ENCODE measurements at regions of chr1 and their contacts with region 1.

Region 1: GRCh38 chr1:1157426-1157913 is 16.2 kb upstream of the TTLL10 start:
- DNase-seq: peak; percentile 86 to 91
- H3K4me3 ChIP-seq: peak overlapping the region; percentile 83
- H3K27ac ChIP-seq: peak overlapping the region; percentile 97
- H3K4me1 ChIP-seq: peaks cover 14% of the 10 kb centered on the region
- H3K27me3 ChIP-seq: no peaks in the 10 kb centered on the region
- CTCF ChIP-seq: no peak

Region 2: DNA sequence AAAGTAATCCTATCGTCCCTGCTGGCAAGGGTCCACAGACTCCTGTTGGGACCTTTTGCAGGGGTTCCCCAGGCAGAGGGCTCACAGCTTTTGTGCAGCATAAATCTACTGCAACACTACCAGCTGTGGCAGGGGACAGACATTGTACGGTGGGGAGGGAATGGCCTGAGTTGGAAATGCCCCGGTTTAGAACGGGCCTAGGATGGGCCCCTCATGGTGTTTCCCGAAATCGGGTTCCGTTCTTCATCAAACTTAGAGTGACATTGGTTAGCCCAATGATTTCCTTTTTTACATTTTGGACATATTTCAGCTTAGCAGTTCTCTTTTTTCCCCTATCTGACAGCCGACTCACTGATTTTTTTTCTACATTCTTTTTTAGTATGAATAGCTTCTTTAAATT is 260.2 kb before region 1 on chr1:
- CTCF ChIA-PET with region 1: no interaction called
- POLR2A ChIA-PET with region 1: no interaction called
- intact Hi-C with region 1: no loop called
- DNase-seq: no peak
- H3K4me3 ChIP-seq: no peak overlapping the region
- H3K27ac ChIP-seq: no peak overlapping the region
- H3K4me1 ChIP-seq: no peaks in the 10 kb centered on the region
- H3K27me3 ChIP-seq: peaks cover 17% of the 10 kb centered on the region
- CTCF ChIP-seq: no peak

Region 3: DNA sequence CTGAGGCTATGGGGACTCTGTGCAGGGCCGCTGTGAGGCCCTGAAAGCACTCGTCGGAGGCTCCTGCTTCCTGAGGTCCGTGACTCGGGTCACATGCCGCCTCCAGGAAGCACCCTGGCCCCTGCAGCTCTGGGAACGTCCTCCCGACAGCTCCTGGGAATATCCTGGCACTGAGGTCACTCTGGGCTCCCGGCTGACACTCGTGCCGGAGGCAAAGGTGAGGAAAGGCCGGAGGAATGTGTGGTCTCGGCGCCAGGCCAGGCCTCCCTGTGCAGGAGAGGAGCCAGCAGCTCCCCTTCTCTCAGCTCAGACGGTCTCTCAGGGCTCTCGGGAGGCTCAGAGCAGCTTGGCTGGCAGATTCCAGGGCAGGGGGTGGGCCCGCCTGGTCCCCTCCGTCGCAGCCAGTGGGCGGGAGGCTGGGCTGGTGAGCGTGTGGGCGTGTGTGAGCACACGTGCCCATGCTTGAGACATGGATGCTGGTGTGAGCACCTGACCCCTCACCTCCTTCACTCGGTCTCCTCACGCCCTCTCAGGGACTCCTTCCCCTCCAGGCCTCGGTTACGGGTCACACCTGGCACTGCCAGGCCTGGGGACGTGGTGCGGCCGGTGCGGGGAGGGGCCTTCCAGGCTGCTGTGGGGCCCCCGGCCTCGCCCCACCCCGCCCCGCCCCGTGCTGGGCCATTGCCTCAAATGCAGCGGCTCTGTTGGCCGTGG is 77.9 kb before region 1 on chr1:
- CTCF ChIA-PET with region 1: no interaction called
- POLR2A ChIA-PET with region 1: no interaction called
- intact Hi-C with region 1: loop called (anchors 2 kb)
- DNase-seq: peak; percentile 96
- H3K4me3 ChIP-seq: peak overlapping the region; percentile 55
- H3K27ac ChIP-seq: peak overlapping the region; percentile 93
- H3K4me1 ChIP-seq: peaks cover 20% of the 10 kb centered on the region
- H3K27me3 ChIP-seq: no peaks in the 10 kb centered on the region
- CTCF ChIP-seq: no peak

Region 4: GRCh38 chr1:1115786-1116700 is 41.4 kb before region 1 on chr1 and contains the start of gene C1orf159:
- CTCF ChIA-PET with region 1: no interaction called
- POLR2A ChIA-PET with region 1: interaction called, 15 read pairs
- intact Hi-C with region 1: no loop called
- DNase-seq: peak; percentile 90 to 99
- H3K4me3 ChIP-seq: peak within 1 kb of the TSS; percentile 75
- H3K27ac ChIP-seq: no peak within 1 kb of the TSS
- H3K4me1 ChIP-seq: peaks cover 7% of the 10 kb centered on the region
- H3K27me3 ChIP-seq: no peaks in the 10 kb centered on the region
- CTCF ChIP-seq: no peak
- total RNA-seq, gene C1orf159: 26.6 and 31.1 TPM in 2 replicates

Region 5: GRCh38 chr1:1137256-1138045 is 20.0 kb before region 1 on chr1:
- CTCF ChIA-PET with region 1: no interaction called
- POLR2A ChIA-PET with region 1: interaction called, 19 read pairs
- intact Hi-C with region 1: no loop called
- DNase-seq: no peak
- H3K4me3 ChIP-seq: peak overlapping the region; percentile 55; the same call in 1 of the 2 replicates
- H3K27ac ChIP-seq: no peak overlapping the region
- H3K4me1 ChIP-seq: peaks cover 31% of the 10 kb centered on the region
- H3K27me3 ChIP-seq: no peaks in the 10 kb centered on the region
- CTCF ChIP-seq: no peak

Region 6: DNA sequence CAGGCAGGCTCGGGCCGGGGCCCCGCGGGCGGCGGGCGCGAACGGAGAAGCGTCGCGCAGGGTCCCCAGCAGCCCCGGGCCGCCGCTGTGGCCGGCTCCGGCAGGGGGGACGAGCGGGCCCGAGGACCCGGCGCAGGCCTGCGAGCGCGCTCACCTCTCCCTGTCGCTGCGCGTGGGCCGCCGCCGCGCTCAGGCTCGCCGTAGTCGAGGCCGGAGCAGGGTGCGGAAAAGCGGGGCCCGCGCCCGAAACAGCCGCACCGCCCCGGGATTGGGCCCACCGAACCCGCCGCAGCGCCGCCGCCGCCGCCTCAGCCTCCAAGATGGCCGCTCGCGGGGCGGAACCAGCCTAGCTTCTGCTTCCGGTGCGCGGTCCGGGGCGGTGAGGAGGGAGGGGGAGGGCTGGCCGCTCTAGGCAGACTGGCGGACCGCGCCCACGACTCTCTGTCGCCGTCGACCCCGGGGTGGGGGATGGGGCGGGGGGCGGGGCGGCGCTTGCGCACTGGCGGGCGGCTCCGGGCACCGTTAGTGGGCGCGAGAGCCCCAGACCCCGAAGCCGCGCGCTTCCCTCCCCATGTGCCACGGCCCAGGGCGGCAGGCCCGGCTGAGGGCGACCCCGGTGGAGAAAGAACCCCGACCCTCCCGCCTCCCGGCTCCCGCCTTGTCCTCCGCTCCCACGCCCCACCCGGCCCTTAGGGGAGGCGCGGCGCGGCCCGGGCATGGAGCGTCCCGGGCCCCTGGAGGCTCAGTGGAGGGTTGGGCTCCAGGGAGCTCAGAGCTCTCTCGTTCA is 116.2 kb after region 1 on chr1 and contains the start of gene UBE2J2:
- CTCF ChIA-PET with region 1: no interaction called
- POLR2A ChIA-PET with region 1: interaction called, 19 read pairs
- intact Hi-C with region 1: no loop called
- DNase-seq: peak; percentile 73 to 85
- H3K4me3 ChIP-seq: peak within 1 kb of the TSS; percentile 70
- H3K27ac ChIP-seq: peak within 1 kb of the TSS; percentile 42
- H3K4me1 ChIP-seq: peaks cover 17% of the 10 kb centered on the region
- H3K27me3 ChIP-seq: no peaks in the 10 kb centered on the region
- CTCF ChIP-seq: no peak
- total RNA-seq, gene UBE2J2: 54.2 and 55.0 TPM in 2 replicates

Region 7: GRCh38 chr1:1358433-1359261 is 201.2 kb after region 1 on chr1 and contains the start of gene MXRA8:
- CTCF ChIA-PET with region 1: no interaction called
- POLR2A ChIA-PET with region 1: no interaction called
- intact Hi-C with region 1: no loop called
- DNase-seq: peak in 1 of 2 experiments; percentile 27
- H3K4me3 ChIP-seq: no peak within 1 kb of the TSS
- H3K27ac ChIP-seq: no peak within 1 kb of the TSS
- H3K4me1 ChIP-seq: peaks cover 24% of the 10 kb centered on the region
- H3K27me3 ChIP-seq: no peaks in the 10 kb centered on the region
- CTCF ChIP-seq: no peak
- total RNA-seq, gene MXRA8: 0.55 and 0.80 TPM in 2 replicates

Measured in PC-9 (cell line).